K562 (cell line): ENCODE measurements at regions of chr5 and their contacts with region 1.

Region 1: DNA sequence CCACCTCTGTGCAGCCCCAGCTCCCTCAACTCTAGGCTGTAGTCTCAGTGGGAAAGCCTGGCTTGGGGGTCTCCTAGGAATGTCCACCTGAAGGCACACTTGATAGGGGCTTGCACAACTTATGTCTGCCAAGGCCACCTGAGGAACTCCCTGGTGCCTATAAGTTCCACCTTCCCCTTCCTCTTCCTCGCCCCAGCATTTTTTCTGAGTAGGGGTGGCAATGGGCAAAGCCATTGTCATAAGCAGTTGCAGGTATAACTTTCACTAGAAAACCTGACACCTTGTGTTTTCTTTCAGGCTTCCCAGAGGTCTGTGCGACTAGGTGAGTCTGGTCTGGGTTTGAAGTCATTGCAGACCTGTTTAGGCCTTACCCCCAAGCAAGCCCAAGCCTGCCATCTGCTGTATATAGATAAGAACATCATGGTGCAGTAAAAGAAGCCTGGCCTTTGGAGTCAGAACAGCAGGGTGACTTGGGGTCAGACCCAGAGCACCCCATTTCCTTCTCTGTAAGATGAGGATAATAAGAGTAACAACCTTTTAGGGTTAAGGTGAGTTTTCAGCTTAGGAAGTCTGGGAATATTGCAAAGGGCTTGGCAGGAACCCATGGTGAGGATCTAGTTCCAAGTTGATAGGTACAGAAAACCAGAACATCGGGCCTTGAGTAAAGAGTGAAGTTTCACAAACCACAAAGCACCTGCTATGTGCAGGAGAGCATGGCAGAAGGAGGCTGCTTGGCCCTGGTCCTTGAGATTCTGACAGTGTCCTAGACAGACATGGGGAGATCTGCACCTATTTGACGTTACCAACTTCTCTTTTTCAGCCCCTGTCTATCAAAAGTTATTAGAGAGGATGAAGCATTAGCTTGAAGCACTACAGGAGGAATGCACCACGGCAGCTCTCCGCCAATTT is 33.8 kb downstream of the TGFBI start:
- DNase-seq: peak; percentile 63 to 78 (median 72)
- ATAC-seq: peak; percentile 89
- H3K4me3 ChIP-seq: no peak overlapping the region
- H3K27ac ChIP-seq: no peak overlapping the region
- H3K4me1 ChIP-seq: no peaks in the 10 kb centered on the region; a peak in 1 of 5 replicates
- H3K27me3 ChIP-seq: peaks cover 8 to 33% of the 10 kb centered on the region in 2 experiments; a peak in 4 of 5 replicates
- CTCF ChIP-seq: peak; percentile 67 to 85 (median 78)
- EP300 ChIP-seq: no peak
- POLR2A ChIP-seq: no peak
- RAD21 ChIP-seq: peak; percentile 87 to 91

Region 2: GRCh38 chr5:135718151-135718550 is 344.5 kb before region 1 on chr5:
- CTCF ChIA-PET with region 1: no interaction called
- POLR2A ChIA-PET with region 1: no interaction called
- in situ Hi-C with region 1: no loop called
- intact Hi-C with region 1: no loop called
- DNase-seq: no peak
- ATAC-seq: no peak
- H3K4me3 ChIP-seq: no peak overlapping the region
- H3K27ac ChIP-seq: no peak overlapping the region
- H3K4me1 ChIP-seq: no peaks in the 10 kb centered on the region
- H3K27me3 ChIP-seq: peaks cover 4 to 45% of the 10 kb centered on the region in 2 experiments; a peak in 4 of 5 replicates
- CTCF ChIP-seq: no peak
- EP300 ChIP-seq: no peak
- POLR2A ChIP-seq: no peak
- RAD21 ChIP-seq: no peak

Region 3: GRCh38 chr5:135887351-135887864 is 175.2 kb before region 1 on chr5:
- CTCF ChIA-PET with region 1: interaction called, 14 read pairs
- POLR2A ChIA-PET with region 1: interaction called, 3 read pairs
- in situ Hi-C with region 1: loop called (anchors 5 kb)
- intact Hi-C with region 1: loop called (anchors 1 kb)
- DNase-seq: peak; percentile 67 to 79 (median 70)
- ATAC-seq: peak; percentile 99
- H3K4me3 ChIP-seq: no peak overlapping the region
- H3K27ac ChIP-seq: no peak overlapping the region
- H3K4me1 ChIP-seq: no peaks in the 10 kb centered on the region
- H3K27me3 ChIP-seq: peaks cover 0 to 19% of the 10 kb centered on the region in 2 experiments; a peak in 4 of 5 replicates
- CTCF ChIP-seq: peak; percentile 84 to 92 (median 88)
- EP300 ChIP-seq: no peak
- POLR2A ChIP-seq: no peak
- RAD21 ChIP-seq: peak; percentile 84 to 92

Region 4: DNA sequence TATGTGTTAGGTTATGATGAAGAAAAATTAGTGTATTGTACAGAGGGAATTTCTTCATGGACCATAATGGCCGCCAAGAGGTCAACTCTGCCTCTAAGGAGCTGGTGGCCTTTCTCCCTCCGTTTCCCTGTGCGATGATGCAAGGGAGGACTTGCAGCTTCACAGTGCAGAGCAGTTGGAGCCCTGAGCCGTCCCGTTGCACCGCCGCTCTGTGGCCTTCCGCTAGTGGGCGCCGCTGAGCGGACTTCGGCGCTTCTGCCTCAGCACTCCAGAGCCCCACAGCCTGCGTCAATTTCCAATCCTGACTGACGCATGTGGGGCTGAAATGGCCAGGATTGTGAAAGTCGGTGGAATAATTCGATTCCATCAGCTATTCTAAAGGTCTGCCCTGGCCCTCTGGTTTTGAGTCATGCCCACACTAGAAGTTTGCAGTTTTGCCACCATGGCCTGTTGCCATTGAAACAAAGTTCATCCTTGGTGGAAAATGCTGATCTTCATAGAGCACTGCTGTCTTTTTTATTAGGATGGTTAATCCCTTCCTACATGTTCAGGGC is 85.2 kb before region 1 on chr5:
- CTCF ChIA-PET with region 1: interaction called, 5 read pairs
- POLR2A ChIA-PET with region 1: no interaction called
- in situ Hi-C with region 1: no loop called
- intact Hi-C with region 1: loop called (anchors 1 kb)
- DNase-seq: peak; percentile 58 to 76 (median 66)
- ATAC-seq: peak; percentile 100
- H3K4me3 ChIP-seq: no peak overlapping the region
- H3K27ac ChIP-seq: no peak overlapping the region
- H3K4me1 ChIP-seq: peaks cover 0 to 4% of the 10 kb centered on the region in 2 experiments; a peak in 2 of 5 replicates
- H3K27me3 ChIP-seq: peaks cover 0 to 13% of the 10 kb centered on the region in 2 experiments; a peak in 4 of 5 replicates
- CTCF ChIP-seq: peak; percentile 84 to 95 (median 90)
- EP300 ChIP-seq: no peak
- POLR2A ChIP-seq: no peak
- RAD21 ChIP-seq: peak; percentile 57 to 81

Region 5: GRCh38 chr5:136174021-136174659 is 111.5 kb after region 1 on chr5:
- CTCF ChIA-PET with region 1: interaction called, 5 read pairs
- POLR2A ChIA-PET with region 1: no interaction called
- in situ Hi-C with region 1: no loop called
- intact Hi-C with region 1: loop called (anchors 1 kb)
- DNase-seq: peak; percentile 36 to 71 (median 52)
- ATAC-seq: peak; percentile 90
- H3K4me3 ChIP-seq: no peak overlapping the region
- H3K27ac ChIP-seq: no peak overlapping the region
- H3K4me1 ChIP-seq: 0 out of 5 replicates have a peak, but pooled peaks cover 0 to 2% of the 10 kb centered on the region in 2 experiments
- H3K27me3 ChIP-seq: no peaks in the 10 kb centered on the region
- CTCF ChIP-seq: peak; percentile 48 to 83 (median 62); a peak in 5 of 6 replicates
- EP300 ChIP-seq: no peak
- POLR2A ChIP-seq: no peak
- RAD21 ChIP-seq: peak; percentile 88 to 93

Region 6: GRCh38 chr5:136212252-136212721 is 149.7 kb after region 1 on chr5:
- CTCF ChIA-PET with region 1: interaction called, 12 read pairs
- POLR2A ChIA-PET with region 1: interaction called, 3 read pairs
- in situ Hi-C with region 1: no loop called
- intact Hi-C with region 1: loop called (anchors 1 kb)
- DNase-seq: peak; percentile 70 to 84 (median 80)
- ATAC-seq: peak; percentile 92
- H3K4me3 ChIP-seq: no peak overlapping the region
- H3K27ac ChIP-seq: no peak overlapping the region
- H3K4me1 ChIP-seq: peaks cover 0 to 2% of the 10 kb centered on the region in 2 experiments; a peak in 1 of 5 replicates
- H3K27me3 ChIP-seq: peaks cover 15 to 77% of the 10 kb centered on the region in 2 experiments; a peak in 4 of 5 replicates
- CTCF ChIP-seq: peak; percentile 80 to 91 (median 89)
- EP300 ChIP-seq: peak; percentile 19; the same call in 1 of the 2 replicates
- POLR2A ChIP-seq: no peak
- RAD21 ChIP-seq: peak; percentile 84 to 93

Region 7: DNA sequence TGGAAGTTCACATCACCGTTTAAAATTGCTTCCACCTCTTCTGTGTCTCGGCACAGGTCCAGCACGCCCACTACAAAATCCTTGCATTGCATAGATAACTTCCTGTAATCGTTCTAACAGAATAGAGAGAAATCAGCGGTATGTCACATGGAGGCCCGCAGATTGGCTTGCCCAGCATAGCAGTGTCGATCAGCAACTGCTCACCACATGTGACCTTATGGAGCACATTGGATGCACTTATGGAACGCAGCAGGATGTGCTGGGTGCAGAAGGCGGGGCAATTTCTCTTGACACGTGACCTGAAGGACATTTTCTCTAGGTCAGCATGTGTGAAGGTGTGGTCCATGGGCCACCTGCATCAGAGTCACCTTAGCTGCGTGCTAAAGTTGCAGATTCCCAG is 253.0 kb after region 1 on chr5:
- CTCF ChIA-PET with region 1: no interaction called
- POLR2A ChIA-PET with region 1: no interaction called
- in situ Hi-C with region 1: no loop called
- intact Hi-C with region 1: no loop called
- DNase-seq: no peak
- ATAC-seq: no peak
- H3K4me3 ChIP-seq: no peak overlapping the region
- H3K27ac ChIP-seq: no peak overlapping the region
- H3K4me1 ChIP-seq: no peaks in the 10 kb centered on the region
- H3K27me3 ChIP-seq: no peaks in the 10 kb centered on the region; a peak in 1 of 5 replicates
- CTCF ChIP-seq: no peak
- EP300 ChIP-seq: no peak
- POLR2A ChIP-seq: no peak
- RAD21 ChIP-seq: no peak

Region 8: GRCh38 chr5:137164961-137165360 is 1102.3 kb after region 1 on chr5:
- CTCF ChIA-PET with region 1: no interaction called
- POLR2A ChIA-PET with region 1: no interaction called
- in situ Hi-C with region 1: no loop called
- intact Hi-C with region 1: no loop called
- DNase-seq: no peak
- ATAC-seq: no peak
- H3K4me3 ChIP-seq: no peak overlapping the region
- H3K27ac ChIP-seq: no peak overlapping the region
- H3K4me1 ChIP-seq: no peaks in the 10 kb centered on the region
- H3K27me3 ChIP-seq: no peaks in the 10 kb centered on the region
- CTCF ChIP-seq: no peak
- EP300 ChIP-seq: no peak
- POLR2A ChIP-seq: no peak
- RAD21 ChIP-seq: no peak